ENCODE measurements at regions of chr3 and their contacts with region 1.

Region 1: DNA sequence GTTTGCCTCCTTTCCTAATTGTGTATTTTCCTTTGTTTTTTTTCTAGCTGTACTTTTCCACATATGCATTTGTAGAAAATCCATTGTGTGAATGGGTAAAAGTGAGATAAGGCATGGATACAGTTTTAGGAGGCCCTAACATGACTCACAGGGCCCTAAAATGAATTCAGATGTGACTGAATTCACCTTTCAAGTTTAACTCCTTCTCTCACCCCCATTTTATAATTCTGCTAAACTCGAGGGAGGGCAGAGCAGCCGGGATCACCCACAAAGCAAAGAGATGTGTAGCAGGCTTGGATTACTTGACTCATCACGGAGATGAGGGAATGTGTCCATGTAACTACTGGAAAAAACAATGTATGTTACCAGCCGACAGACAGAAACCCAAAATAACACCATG is 59.9 kb downstream of the FOXP1 start:
- DNase-seq: no peak
- ATAC-seq: no peak

Region 2: GRCh38 chr3:71468311-71469137 is 55.1 kb before region 1 on chr3:
- intact Hi-C with region 1: no loop called
- DNase-seq: no peak
- ATAC-seq: no peak

Region 3: DNA sequence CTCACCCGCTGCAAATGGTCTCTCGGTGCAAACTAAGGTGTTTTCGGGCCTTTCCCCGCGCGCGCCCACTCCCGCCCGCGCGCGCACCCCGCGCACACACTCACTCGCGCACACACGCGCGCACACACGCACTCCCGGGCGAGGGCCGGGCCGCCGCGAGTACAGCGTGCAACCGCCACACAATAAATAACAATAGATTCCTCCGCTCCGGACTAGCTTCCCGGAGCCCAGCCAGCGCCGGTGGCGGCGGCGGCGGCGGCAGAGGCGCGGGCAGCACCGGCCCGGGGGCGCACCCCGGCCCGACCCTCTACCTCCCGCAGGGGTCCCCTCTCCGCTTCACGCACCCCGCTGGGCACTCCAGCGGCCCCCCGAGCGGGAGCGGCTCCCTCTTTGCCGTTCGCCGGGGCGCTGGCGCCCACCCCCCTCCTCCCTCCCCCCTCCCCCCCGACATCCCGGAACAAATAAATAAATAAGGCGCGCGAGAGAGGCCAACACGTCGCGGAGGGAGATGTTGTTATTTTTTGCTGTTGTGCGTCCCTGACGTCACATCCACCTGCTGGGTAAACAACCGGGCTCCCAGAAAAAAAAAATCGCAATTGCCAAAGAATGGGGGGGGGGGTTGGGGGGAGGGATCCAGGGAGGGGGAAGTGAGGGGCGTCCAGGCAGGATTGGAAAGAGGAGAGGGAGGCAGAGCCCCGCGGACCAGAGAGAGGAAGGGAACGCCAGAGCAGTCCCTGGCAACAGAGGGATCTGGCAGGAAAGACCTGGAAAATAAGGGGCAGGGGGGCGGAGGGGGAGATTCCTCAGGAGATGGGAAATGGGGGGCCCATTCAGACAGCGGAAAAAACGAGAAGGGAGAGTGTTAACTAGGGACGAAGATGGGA is 60.2 kb after region 1 on chr3 and contains the start of gene FOXP1:
- intact Hi-C with region 1: loop called (anchors 1 kb)
- DNase-seq: peak; percentile 81
- ATAC-seq: peak; percentile 67
- total RNA-seq, gene FOXP1: 137 TPM

Measured in sciatic nerve (tissue), 2 donors.